Kidney (tissue), 22 donors: ENCODE measurements at regions of chr7 and their contacts with region 1.

Region 1: DNA sequence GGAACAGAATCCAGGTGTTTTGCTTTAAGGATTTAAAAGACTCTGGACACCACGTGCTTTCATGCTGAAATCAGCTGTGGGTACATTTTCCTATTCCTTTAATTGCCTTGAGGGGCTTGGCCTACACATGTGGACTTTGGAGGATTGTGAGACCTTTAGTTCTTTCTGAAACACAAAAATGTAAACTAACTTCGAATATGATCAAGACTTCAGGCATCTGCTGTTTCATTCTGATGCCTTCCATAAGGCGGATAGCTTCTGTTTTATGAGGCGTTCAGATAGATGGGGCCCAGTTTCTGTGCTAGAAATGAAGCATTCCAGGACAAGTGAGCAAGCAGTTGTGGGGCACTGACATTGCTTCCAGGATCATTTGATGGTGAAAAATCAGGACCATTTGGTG is 1.5 kb upstream of the NOBOX start:
- DNase-seq: peak in 3 of 5 donors; percentile 24 to 64 (median 60)
- H3K4me3 ChIP-seq: no peak overlapping the region
- H3K27ac ChIP-seq: no peak overlapping the region
- H3K4me1 ChIP-seq: no peaks in the 10 kb centered on the region
- H3K27me3 ChIP-seq: no peaks in the 10 kb centered on the region
- CTCF ChIP-seq: no peak

Region 2: GRCh38 chr7:144048648-144049047 is 356.3 kb before region 1 on chr7 and contains the start of gene OR2A5:
- intact Hi-C with region 1: no loop called
- DNase-seq: no peak
- H3K4me3 ChIP-seq: no peak within 1 kb of the TSS
- H3K27ac ChIP-seq: no peak within 1 kb of the TSS
- H3K4me1 ChIP-seq: no peaks in the 10 kb centered on the region
- H3K27me3 ChIP-seq: no peaks in the 10 kb centered on the region
- CTCF ChIP-seq: no peak
- total RNA-seq, gene OR2A5: not detected

Region 3: DNA sequence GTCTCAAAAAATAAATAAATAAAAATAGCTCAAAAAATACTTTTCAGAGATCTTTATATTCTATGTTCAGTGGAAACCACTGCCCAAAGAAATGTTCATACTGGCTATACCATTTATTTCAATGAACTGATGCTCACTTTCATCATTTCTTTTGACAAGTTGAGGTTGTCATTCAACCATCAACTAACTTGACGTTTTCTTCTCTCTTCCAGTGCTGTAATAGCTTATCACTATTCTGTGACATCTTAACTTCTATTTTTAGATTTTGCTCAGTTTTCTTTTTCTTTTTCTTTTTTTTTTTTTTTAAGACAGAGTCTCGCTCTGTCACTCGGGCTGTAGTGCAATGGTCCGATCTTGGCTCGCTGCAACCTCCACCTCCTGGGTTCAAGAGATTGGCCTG is 230.3 kb before region 1 on chr7:
- intact Hi-C with region 1: loop called (anchors 5 kb)
- DNase-seq: no peak
- H3K4me3 ChIP-seq: no peak overlapping the region
- H3K27ac ChIP-seq: no peak overlapping the region
- H3K4me1 ChIP-seq: no peaks in the 10 kb centered on the region
- H3K27me3 ChIP-seq: no peaks in the 10 kb centered on the region
- CTCF ChIP-seq: no peak

Region 4: DNA sequence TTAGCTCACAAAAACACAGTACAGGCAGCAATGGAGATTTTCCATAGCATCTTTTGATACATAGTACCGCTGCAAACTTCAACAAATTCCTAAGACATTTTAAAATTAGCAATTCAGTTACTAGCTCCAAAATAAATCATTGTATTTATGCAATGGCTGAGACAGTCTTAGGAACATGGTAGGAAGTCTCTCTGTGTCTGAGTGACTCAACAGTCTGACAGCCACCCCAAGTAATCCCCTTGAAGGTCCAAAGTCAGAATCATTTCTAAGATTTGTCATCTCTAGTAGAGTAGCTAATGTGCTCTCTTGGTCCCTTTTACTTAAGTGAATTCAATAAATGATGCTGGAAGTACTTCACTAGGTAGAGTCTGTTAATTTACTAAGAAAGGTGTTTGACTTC is 92.3 kb after region 1 on chr7:
- intact Hi-C with region 1: no loop called
- DNase-seq: no peak
- H3K4me3 ChIP-seq: no peak overlapping the region
- H3K27ac ChIP-seq: no peak overlapping the region
- H3K4me1 ChIP-seq: no peaks in the 10 kb centered on the region
- H3K27me3 ChIP-seq: no peaks in the 10 kb centered on the region
- CTCF ChIP-seq: no peak